ENCODE measurements at regions of chr14 and their contacts with region 1.

Region 1: DNA sequence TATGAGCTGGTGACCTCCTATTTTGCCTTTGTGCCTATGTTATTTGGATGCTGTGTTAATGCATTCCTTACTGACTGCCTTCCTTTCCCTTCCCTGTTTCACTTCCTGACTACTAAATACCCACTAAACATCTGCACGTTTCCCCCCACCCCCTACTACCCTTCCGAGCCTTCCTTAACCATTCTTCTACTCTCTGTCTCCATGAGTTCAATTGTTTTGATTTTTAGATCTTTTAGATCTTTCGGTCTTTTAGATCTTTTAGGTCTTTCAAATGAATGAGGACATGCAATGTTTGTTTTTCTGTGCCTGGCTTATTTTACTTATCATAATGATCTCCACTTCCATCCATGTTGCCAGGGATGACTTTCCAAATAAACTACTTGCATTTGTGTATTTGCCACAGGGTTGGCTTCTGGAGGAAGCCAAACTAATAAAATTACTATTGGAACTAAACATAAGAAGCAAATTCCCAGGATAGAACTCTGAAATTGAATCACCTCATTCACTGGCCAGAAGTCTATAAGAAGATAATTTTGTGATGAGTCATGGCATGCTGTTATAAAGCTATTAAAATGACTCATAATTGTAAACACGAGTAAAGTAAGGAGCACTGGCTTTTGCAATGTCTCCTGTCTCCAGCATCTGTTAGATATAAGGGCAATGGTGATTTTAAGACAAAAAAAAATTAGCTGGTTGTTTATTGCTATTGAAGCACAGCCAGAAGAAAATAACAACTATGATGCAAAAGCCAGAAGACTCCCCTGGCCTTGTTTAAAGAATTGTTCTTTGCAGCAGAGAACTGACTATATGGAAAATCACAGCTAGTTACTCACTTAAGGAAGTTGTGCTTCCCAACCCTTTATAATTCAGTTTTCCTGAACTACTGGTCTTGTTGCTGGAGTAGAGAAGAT is 586.3 kb downstream of the LRFN5 start:
- DNase-seq: peak; percentile 98
- ATAC-seq: peak; percentile 85
- H3K4me3 ChIP-seq: peak overlapping the region; percentile 46; the same call in 1 of the 2 replicates
- H3K27ac ChIP-seq: peak overlapping the region; percentile 95
- H3K4me1 ChIP-seq: peaks cover 37% of the 10 kb centered on the region
- H3K27me3 ChIP-seq: no peaks in the 10 kb centered on the region
- CTCF ChIP-seq: no peak

Region 2: DNA sequence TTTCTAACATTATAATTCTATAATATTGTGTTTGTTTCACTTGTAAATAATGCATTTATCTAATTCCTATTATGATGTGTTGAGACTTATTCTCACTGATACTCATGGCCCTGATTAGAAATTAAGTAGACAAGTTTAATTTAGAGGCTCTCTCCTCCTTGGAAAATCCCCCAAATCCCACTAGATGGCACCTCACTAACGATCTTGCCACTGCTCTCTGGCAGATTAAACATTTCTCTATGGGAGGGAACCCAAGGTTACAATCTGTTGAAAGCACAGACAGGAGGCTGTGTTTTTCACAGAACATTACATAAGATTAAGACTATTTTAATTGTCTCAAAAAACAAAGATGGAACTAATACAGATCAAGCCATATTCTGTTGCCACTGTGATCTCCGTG is 267.6 kb before region 1 on chr14:
- CTCF ChIA-PET with region 1: no interaction called
- POLR2A ChIA-PET with region 1: no interaction called
- intact Hi-C with region 1: loop called (anchors 1 kb)
- DNase-seq: peak; percentile 63
- ATAC-seq: peak; percentile 97
- H3K4me3 ChIP-seq: no peak overlapping the region
- H3K27ac ChIP-seq: no peak overlapping the region
- H3K4me1 ChIP-seq: no peaks in the 10 kb centered on the region
- H3K27me3 ChIP-seq: no peaks in the 10 kb centered on the region
- CTCF ChIP-seq: peak; percentile 73

Region 3: GRCh38 chr14:42002141-42002540 is 190.9 kb before region 1 on chr14:
- CTCF ChIA-PET with region 1: no interaction called
- POLR2A ChIA-PET with region 1: no interaction called
- intact Hi-C with region 1: no loop called
- DNase-seq: peak; percentile 34
- ATAC-seq: peak; percentile 61
- H3K4me3 ChIP-seq: no peak overlapping the region
- H3K27ac ChIP-seq: no peak overlapping the region
- H3K4me1 ChIP-seq: peaks cover 26% of the 10 kb centered on the region
- H3K27me3 ChIP-seq: no peaks in the 10 kb centered on the region
- CTCF ChIP-seq: no peak

Region 4: DNA sequence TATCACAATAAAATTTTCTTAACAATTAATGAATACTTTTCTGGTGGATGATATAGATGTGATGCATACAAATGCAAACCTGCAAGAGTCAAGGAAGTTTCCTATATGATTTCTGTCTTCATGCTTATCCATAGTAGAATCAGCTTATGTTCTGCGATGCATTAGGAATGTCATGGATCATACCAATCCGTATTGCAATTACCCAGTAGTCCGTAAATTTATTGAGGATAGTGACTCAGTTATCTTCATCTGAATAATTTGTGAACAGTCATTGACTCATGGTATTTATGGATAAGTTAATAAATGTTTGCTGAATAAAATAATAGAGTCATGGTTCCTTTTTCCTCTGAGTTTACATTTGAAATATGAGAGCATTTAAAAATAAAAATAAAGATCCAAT is 102.9 kb before region 1 on chr14:
- CTCF ChIA-PET with region 1: no interaction called
- POLR2A ChIA-PET with region 1: no interaction called
- intact Hi-C with region 1: loop called (anchors 5 kb)
- DNase-seq: peak; percentile 73
- ATAC-seq: peak; percentile 88
- H3K4me3 ChIP-seq: no peak overlapping the region
- H3K27ac ChIP-seq: no peak overlapping the region
- H3K4me1 ChIP-seq: peaks cover 11% of the 10 kb centered on the region
- H3K27me3 ChIP-seq: no peaks in the 10 kb centered on the region
- CTCF ChIP-seq: no peak

Region 5: DNA sequence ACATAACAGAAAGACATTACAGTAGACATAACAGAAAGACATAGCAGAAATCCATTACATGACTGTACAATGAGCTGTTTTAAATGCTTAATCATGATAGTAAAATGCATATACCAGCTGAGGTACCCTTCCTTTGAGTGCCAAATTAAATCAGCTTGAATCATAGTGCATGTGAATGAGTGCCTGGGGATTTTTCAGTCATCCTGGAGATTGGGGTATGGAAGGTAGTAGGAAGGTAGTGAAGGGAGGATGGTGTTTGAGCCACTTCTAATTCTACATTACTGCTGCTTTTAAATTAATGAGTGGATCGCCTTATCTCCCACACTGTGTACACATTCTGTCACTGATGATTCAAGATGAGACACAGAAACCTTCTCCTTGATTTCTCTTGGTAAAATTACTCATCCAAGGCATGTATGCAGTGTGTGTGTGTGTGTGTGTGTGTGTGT is 52.1 kb before region 1 on chr14:
- CTCF ChIA-PET with region 1: no interaction called
- POLR2A ChIA-PET with region 1: no interaction called
- intact Hi-C with region 1: loop called (anchors 1 kb)
- DNase-seq: peak; percentile 90
- ATAC-seq: peak; percentile 93
- H3K4me3 ChIP-seq: peak overlapping the region; percentile 1; the same call in 1 of the 2 replicates
- H3K27ac ChIP-seq: peak overlapping the region; percentile 89
- H3K4me1 ChIP-seq: peaks cover 28% of the 10 kb centered on the region
- H3K27me3 ChIP-seq: no peaks in the 10 kb centered on the region
- CTCF ChIP-seq: no peak

Region 6: GRCh38 chr14:42224053-42224888 is 31.3 kb after region 1 on chr14:
- CTCF ChIA-PET with region 1: no interaction called
- POLR2A ChIA-PET with region 1: no interaction called
- intact Hi-C with region 1: loop called (anchors 1 kb)
- DNase-seq: peak; percentile 90
- ATAC-seq: peak; percentile 57
- H3K4me3 ChIP-seq: no peak overlapping the region
- H3K27ac ChIP-seq: peak overlapping the region; percentile 38
- H3K4me1 ChIP-seq: peaks cover 26% of the 10 kb centered on the region
- H3K27me3 ChIP-seq: no peaks in the 10 kb centered on the region
- CTCF ChIP-seq: peak; percentile 96

Region 7: DNA sequence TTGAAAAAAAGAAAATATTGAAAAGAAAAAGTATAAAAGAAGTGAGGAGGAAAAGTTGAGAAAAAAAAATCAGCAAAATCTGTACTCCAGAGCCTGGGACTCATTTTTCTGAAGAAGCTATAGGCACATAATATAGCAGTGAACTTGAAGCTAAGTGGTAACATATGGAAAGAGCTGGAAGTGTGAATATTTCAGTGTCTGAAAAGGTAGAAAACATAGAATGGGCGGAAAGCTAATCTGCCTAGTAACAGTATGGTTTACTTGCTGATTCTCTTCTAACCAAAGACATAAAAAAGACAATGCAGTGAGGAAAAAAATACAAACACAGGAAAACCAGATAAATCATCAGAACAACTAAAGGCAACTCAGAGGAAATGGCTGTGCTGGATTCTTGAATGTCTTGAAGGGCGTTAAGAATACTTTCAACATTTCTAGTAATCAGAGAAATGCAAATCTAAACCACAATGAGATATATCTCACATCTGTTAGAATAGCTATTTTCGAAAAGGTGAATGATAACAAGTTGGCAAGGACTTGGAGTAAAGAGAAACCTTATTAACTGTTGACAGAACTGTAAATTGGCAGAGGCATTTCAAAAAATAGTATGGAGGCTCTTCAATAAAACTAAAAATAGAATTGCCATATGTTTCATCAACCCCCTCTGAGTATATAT is 198.3 kb after region 1 on chr14:
- CTCF ChIA-PET with region 1: no interaction called
- POLR2A ChIA-PET with region 1: no interaction called
- intact Hi-C with region 1: no loop called
- DNase-seq: no peak
- ATAC-seq: no peak
- H3K4me3 ChIP-seq: no peak overlapping the region
- H3K27ac ChIP-seq: no peak overlapping the region
- H3K4me1 ChIP-seq: no peaks in the 10 kb centered on the region
- H3K27me3 ChIP-seq: no peaks in the 10 kb centered on the region
- CTCF ChIP-seq: no peak

Measured in PC-3 (cell line).